ENCODE measurements at regions of chr11 and their contacts with region 1.

Region 1: GRCh38 chr11:9613118-9613829 is 39.8 kb downstream of the WEE1 start:
- DNase-seq: peak; percentile 91
- ATAC-seq: peak; percentile 76
- H3K4me3 Mint-ChIP-seq: peak overlapping the region; percentile 82
- H3K27ac Mint-ChIP-seq: peak overlapping the region; percentile 94
- H3K4me1 Mint-ChIP-seq: peaks cover 27% of the 10 kb centered on the region
- H3K27me3 Mint-ChIP-seq: peaks cover 4% of the 10 kb centered on the region

Region 2: DNA sequence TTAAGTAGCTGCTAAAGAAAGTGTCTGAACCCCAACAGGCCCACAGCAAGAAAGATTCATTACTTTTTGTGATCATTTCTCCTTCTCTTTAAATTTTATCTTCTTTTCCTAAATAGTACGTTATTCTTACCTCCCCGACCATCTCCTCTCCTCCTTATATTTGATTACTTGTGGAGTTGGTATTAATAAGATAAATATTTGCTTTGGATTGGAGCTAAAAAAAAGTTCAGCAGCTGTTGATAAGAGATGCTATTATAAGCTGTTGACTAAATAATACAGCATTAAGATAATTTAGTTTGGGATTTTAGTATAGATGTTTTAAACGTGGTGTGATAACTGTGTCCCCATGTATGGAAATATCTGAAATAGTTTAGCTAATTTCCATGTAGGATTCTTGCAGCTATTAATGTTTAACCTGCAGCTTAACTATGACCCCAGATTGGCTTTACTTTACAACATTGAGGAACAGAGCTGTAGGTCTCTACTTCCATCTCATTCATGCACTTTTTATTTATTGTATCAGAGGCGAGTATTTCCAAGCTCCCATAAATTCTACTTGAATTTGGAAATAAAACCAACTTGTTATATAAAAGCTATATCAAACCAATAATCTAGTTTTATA is 114.7 kb before region 1 on chr11:
- CTCF ChIA-PET with region 1: interaction called, 10 read pairs
- POLR2A ChIA-PET with region 1: no interaction called
- DNase-seq: no peak
- ATAC-seq: no peak
- H3K4me3 Mint-ChIP-seq: no peak overlapping the region
- H3K27ac Mint-ChIP-seq: no peak overlapping the region
- H3K4me1 Mint-ChIP-seq: no peaks in the 10 kb centered on the region
- H3K27me3 Mint-ChIP-seq: no peaks in the 10 kb centered on the region

Region 3: GRCh38 chr11:9573052-9573774 is 40.1 kb before region 1 on chr11 and contains the start of gene WEE1:
- CTCF ChIA-PET with region 1: interaction called, 32 read pairs
- POLR2A ChIA-PET with region 1: interaction called, 24 read pairs
- DNase-seq: peak; percentile 98
- ATAC-seq: peak; percentile 96
- H3K4me3 Mint-ChIP-seq: peak within 1 kb of the TSS; percentile 98
- H3K27ac Mint-ChIP-seq: peak within 1 kb of the TSS; percentile 87
- H3K4me1 Mint-ChIP-seq: peaks cover 46% of the 10 kb centered on the region
- H3K27me3 Mint-ChIP-seq: peaks cover 14% of the 10 kb centered on the region
- total RNA-seq, gene WEE1: 73.3 to 75.1 TPM

Region 4: GRCh38 chr11:9601037-9601875 is 12.0 kb before region 1 on chr11:
- CTCF ChIA-PET with region 1: interaction called, 62 read pairs
- POLR2A ChIA-PET with region 1: interaction called, 24 read pairs
- DNase-seq: peak; percentile 89
- ATAC-seq: peak; percentile 92
- H3K4me3 Mint-ChIP-seq: peak overlapping the region; percentile 72
- H3K27ac Mint-ChIP-seq: peak overlapping the region; percentile 71
- H3K4me1 Mint-ChIP-seq: peaks cover 31% of the 10 kb centered on the region
- H3K27me3 Mint-ChIP-seq: peaks cover 11% of the 10 kb centered on the region

Region 5: DNA sequence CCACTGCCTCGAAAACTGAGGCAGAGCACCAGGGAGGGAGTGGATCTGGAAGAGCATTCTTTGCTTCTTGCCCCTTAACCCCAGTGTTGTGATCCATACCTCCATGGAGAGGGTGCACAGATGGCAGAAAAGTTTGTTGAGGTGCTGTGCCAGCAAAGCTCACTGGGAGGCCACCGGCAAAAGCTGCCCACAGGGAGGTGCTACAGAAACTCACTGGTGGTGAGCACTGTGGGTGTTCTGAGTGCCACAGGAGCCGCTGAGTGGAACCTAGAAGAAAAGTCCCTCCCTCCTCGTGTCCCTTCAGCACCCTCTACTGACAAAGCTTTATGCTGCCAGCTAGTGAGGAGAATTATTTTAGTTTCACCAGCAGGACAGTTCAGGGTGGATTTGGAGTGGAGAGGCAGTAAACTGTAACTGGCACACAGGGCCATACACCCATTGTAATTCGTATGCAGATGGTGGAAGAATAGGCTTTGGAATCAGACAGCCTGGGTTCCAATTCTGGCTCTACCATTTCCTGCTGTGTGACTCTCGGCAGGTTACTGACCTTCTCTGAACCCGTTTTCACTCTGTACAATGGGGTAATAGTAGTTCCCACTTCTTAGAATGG is 135.2 kb after region 1 on chr11:
- CTCF ChIA-PET with region 1: interaction called, 119 read pairs
- POLR2A ChIA-PET with region 1: interaction called, 3 read pairs
- DNase-seq: peak; percentile 84
- ATAC-seq: peak; percentile 99
- H3K4me3 Mint-ChIP-seq: no peak overlapping the region
- H3K27ac Mint-ChIP-seq: no peak overlapping the region
- H3K4me1 Mint-ChIP-seq: peaks cover 21% of the 10 kb centered on the region
- H3K27me3 Mint-ChIP-seq: no peaks in the 10 kb centered on the region